Prostate gland (tissue), 2 donors: ENCODE measurements at regions of chr5 and their contacts with region 1.

Region 1: GRCh38 chr5:86968301-86968753 is 299.4 kb upstream of the RASA1 start:
- DNase-seq: no peak
- H3K4me3 ChIP-seq: no peak overlapping the region
- H3K27ac ChIP-seq: no peak overlapping the region
- H3K4me1 ChIP-seq: no peaks in the 10 kb centered on the region
- H3K27me3 ChIP-seq: no peaks in the 10 kb centered on the region
- CTCF ChIP-seq: peak in 3 of 4 experiments; percentile 32 to 49 (median 42)
- POLR2A ChIP-seq: no peak

Region 2: DNA sequence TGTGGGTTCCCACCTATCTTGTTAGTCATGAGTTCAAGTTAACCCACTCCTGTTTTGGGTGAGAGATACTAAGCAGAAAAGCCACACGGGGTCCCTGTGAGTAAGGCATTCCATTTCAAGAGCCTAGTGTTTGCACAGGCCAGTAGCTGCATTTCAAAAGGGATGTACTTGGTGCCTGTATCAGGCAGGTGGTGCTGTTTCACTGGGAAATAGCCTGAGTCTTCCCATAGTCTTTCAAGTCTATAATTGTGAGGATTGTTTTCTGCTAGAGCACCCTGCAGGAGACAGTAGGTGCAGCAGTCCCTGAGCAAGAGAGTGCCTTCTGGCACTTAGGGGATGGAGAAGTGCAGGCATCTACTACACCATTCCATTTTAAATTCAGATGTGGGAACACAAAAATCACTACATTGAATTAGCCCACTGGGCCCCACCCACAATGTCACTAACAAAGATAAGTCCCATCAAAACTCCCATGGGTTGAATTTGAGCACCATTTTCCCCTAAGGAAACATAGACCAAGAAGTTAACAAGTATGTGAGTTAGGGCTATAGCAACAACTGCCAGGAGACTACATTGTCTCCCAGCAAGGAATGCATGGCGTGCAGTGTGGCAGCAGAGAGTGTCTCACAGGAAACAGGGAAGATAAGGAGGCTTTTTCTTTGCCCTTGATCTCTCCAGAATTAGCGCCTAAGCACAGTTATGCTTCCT is 87.4 kb before region 1 on chr5:
- intact Hi-C with region 1: loop called (anchors 5 kb)
- DNase-seq: peak; percentile 13
- H3K4me3 ChIP-seq: no peak overlapping the region
- H3K27ac ChIP-seq: no peak overlapping the region
- H3K4me1 ChIP-seq: no peaks in the 10 kb centered on the region
- H3K27me3 ChIP-seq: no peaks in the 10 kb centered on the region
- CTCF ChIP-seq: peak in 3 of 4 experiments; percentile 53 to 59 (median 54)
- POLR2A ChIP-seq: no peak

Region 3: DNA sequence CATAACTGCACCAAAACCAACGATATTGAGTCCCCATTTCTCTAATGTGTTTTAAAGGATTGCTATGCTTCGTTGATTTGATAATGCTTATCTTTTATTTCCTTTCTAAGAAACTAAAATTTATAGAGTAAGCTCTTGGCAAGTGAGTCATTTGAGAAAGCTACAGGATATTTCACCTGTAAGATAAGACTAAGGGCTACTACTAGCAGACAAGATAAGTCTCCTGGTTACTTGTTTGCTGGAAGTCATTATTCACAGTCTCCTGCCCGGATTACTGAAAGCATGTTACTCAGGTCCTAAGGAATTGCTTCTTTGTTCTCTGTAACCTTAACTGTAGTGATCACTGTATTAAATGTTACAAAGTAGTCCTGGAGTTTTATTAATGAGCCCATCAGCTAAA is 16.6 kb before region 1 on chr5:
- intact Hi-C with region 1: no loop called
- DNase-seq: no peak
- H3K4me3 ChIP-seq: no peak overlapping the region
- H3K27ac ChIP-seq: no peak overlapping the region
- H3K4me1 ChIP-seq: no peaks in the 10 kb centered on the region
- H3K27me3 ChIP-seq: no peaks in the 10 kb centered on the region
- CTCF ChIP-seq: no peak
- POLR2A ChIP-seq: no peak

Region 4: DNA sequence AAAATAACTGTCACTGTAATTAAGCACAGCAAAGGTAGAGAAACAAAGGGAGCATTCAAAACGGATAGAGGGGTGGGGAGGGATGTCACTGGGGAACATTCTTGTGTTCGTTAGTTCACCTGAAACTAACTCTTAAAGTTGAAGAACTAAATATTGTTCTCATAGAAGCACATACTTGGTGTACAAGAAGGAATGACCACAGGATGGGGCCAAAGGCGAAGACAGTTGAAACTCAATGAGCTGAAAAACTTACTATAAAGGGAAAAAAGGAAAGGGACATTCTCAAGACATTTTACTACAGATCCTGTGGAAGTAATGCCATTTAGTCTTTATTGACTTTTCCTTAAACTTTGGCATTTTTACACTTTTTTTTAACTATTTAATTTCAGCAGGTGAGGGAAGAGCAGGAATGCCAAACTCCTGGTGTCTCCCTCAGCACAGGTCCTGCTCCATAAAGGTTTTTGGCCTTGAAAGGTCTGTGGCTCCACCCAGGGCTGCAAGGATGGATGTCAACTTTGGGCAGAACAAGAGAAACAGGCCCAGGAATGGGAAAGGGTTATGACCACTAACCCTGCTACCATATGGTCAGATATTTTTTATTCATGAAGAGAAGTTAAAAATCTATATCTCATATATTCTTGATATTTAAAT is 101.8 kb after region 1 on chr5:
- intact Hi-C with region 1: no loop called
- DNase-seq: no peak
- H3K4me3 ChIP-seq: no peak overlapping the region
- H3K27ac ChIP-seq: no peak overlapping the region
- H3K4me1 ChIP-seq: no peaks in the 10 kb centered on the region
- H3K27me3 ChIP-seq: no peaks in the 10 kb centered on the region
- CTCF ChIP-seq: peak in 2 of 4 experiments; percentile 23 to 24
- POLR2A ChIP-seq: no peak